Left cardiac atrium (tissue), 4 donors: ENCODE measurements at regions of chr3 and their contacts with region 1.

Region 1: DNA sequence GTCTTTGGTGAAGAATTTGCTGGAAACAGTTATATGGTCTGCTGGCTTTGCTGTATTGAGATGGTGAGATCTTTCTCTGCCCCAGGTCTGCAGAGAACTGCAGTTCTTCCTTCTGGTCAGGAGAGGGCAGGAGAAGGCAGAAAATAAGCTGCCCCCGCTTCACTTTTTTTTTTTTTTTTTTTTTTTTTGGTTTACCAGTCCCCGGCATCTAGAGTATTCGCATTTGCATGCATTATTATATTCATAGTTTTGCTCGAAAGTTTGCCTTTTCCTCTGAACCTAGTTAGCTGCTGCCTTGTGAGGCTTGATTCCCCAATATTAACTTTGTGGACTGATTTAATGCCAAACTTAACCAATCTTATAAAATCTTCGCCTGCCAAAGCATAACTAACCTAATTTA is 10.6 kb upstream of the PARL start:
- DNase-seq: no peak
- ATAC-seq: peak; percentile 72 to 76

Region 2: GRCh38 chr3:183966251-183966801 is 71.0 kb after region 1 on chr3:
- intact Hi-C with region 1: no loop called
- DNase-seq: no peak
- ATAC-seq: no peak

Region 3: DNA sequence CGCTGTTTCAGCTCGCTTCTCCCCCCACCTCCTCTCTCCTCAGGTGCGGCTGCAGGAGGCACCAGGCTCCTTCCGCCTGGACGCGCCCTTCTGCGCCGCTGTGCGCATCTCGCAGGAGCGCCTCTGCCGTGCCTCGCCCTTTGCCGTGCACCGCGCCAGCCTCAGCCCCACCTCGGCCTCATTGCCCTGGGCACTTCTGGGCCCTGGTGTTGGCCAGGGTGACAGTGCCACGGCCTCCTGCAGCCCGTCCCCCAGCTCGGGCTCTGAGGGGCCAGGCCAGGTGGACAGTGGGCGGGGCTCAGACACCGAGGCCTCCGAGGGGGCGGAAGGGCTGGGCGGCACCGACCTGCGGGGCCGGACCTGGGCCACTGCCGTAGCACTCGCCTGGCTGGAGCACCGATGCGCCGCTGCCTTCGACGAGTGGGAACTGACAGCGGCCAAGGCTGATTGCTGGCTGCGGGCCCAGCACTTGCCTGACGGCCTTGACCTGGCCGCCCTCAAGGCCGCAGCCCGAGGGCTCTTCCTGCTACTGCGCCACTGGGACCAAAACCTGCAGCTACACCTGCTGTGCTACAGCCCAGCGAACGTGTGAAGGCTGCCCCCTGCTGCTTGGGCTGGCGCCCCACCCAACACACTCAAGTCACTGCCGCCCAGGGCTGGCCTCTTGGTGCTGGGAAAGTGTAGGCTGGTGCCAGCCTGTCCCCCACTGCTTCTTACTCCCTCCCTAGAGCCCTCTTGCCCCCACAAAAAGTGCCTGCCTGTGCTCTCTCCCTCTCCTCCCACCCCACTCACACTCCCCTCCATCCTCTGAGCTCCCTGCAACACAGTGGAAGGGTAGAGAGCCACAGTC is 346.4 kb after region 1 on chr3:
- intact Hi-C with region 1: loop called in 1 of 2 experiments (anchors 5 kb)
- DNase-seq: no peak
- ATAC-seq: peak; percentile 58 to 76

Region 4: DNA sequence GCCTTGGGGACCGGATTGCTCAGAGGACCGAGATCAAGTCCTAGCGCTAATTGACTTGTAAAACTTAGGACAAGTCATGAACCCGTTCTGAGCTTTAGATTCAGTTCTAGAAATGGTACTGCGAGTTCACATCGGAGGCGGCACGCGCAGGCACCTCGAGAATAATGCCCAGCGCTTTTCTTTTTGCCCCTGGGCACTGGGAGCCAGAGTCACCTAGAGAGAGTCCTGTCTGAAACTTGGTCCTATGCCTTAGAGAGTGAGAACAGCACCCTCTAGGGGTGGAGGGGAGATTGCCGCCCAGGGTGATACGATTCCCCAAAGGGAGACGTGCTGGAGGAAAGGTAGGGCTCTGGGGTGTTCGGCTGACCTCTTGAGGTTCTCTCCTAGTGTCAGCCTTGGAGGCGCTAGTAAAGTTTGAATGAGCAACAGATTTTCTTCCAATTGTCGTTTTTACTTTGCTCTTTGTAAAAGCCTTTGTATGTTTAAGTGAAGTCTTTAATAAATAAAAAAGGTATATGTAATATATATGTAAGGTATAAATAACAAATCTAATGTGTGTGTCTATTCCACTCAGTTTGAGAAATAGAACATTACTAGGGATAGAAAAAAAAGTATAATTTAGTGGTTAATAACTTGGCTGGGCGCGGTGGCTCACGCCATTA is 355.0 kb after region 1 on chr3:
- intact Hi-C with region 1: loop called in 1 of 2 experiments (anchors 10 kb)
- DNase-seq: peak; percentile 85
- ATAC-seq: peak; percentile 78 to 88

Region 5: GRCh38 chr3:184289426-184289938 is 394.2 kb after region 1 on chr3:
- intact Hi-C with region 1: loop called in 1 of 2 experiments (anchors 5 kb)
- DNase-seq: peak; percentile 42
- ATAC-seq: peak; percentile 21 to 52